ENCODE measurements at regions of chr6 and their contacts with region 1.

Region 1: GRCh38 chr6:36094753-36095496 is 35.4 kb upstream of the MAPK13 start:
- DNase-seq: peak; percentile 55 to 66
- ATAC-seq: peak; percentile 97 to 98
- H3K4me3 ChIP-seq: no peak overlapping the region
- H3K27ac ChIP-seq: peak overlapping the region; percentile 56 to 68; a peak in 5 of 6 replicates
- H3K4me1 ChIP-seq: peaks cover 22% of the 10 kb centered on the region
- CTCF ChIP-seq: peak; percentile 91
- EP300 ChIP-seq: no peak
- POLR2A ChIP-seq: no peak
- RAD21 ChIP-seq: peak; percentile 82 to 84

Region 2: GRCh38 chr6:36027501-36028087 is 67.3 kb before region 1 on chr6 and contains the start of gene MAPK14:
- CTCF ChIA-PET with region 1: interaction called, 84 read pairs
- POLR2A ChIA-PET with region 1: interaction called, 8 read pairs
- DNase-seq: peak; percentile 88 to 99
- ATAC-seq: peak; percentile 88 to 95
- H3K4me3 ChIP-seq: peak within 1 kb of the TSS; percentile 97
- H3K27ac ChIP-seq: peak within 1 kb of the TSS; percentile 88 to 99
- H3K4me1 ChIP-seq: peaks cover 10% of the 10 kb centered on the region; the same call in 2 of the 3 replicates
- CTCF ChIP-seq: peak; percentile 71
- EP300 ChIP-seq: no peak
- POLR2A ChIP-seq: peak; percentile 83
- RAD21 ChIP-seq: peak; percentile 81
- polyA plus RNA-seq, gene MAPK14: 36.7 and 40.2 TPM in 2 replicates

Region 3: GRCh38 chr6:36033935-36034334 is 61.0 kb before region 1 on chr6:
- CTCF ChIA-PET with region 1: interaction called, 84 read pairs
- POLR2A ChIA-PET with region 1: no interaction called
- DNase-seq: peak in 1 of 2 experiments; percentile 3
- ATAC-seq: no peak
- H3K4me3 ChIP-seq: no peak overlapping the region
- H3K27ac ChIP-seq: no peak overlapping the region
- H3K4me1 ChIP-seq: peaks cover 18% of the 10 kb centered on the region; the same call in 2 of the 3 replicates
- CTCF ChIP-seq: no peak
- EP300 ChIP-seq: no peak
- POLR2A ChIP-seq: no peak
- RAD21 ChIP-seq: no peak

Region 4: GRCh38 chr6:36052097-36052496 is 42.8 kb before region 1 on chr6:
- CTCF ChIA-PET with region 1: interaction called, 17 read pairs
- POLR2A ChIA-PET with region 1: no interaction called
- DNase-seq: no peak
- ATAC-seq: no peak
- H3K4me3 ChIP-seq: no peak overlapping the region
- H3K27ac ChIP-seq: no peak overlapping the region
- H3K4me1 ChIP-seq: no peaks in the 10 kb centered on the region
- CTCF ChIP-seq: no peak
- EP300 ChIP-seq: no peak
- POLR2A ChIP-seq: no peak
- RAD21 ChIP-seq: no peak

Region 5: GRCh38 chr6:36073587-36073986 is 21.3 kb before region 1 on chr6:
- CTCF ChIA-PET with region 1: interaction called, 23 read pairs
- POLR2A ChIA-PET with region 1: no interaction called
- DNase-seq: no peak
- ATAC-seq: no peak
- H3K4me3 ChIP-seq: no peak overlapping the region
- H3K27ac ChIP-seq: no peak overlapping the region
- H3K4me1 ChIP-seq: peaks cover under 1% of the 10 kb centered on the region; the same call in 1 of the 3 replicates
- CTCF ChIP-seq: no peak
- EP300 ChIP-seq: no peak
- POLR2A ChIP-seq: no peak
- RAD21 ChIP-seq: no peak

Region 6: DNA sequence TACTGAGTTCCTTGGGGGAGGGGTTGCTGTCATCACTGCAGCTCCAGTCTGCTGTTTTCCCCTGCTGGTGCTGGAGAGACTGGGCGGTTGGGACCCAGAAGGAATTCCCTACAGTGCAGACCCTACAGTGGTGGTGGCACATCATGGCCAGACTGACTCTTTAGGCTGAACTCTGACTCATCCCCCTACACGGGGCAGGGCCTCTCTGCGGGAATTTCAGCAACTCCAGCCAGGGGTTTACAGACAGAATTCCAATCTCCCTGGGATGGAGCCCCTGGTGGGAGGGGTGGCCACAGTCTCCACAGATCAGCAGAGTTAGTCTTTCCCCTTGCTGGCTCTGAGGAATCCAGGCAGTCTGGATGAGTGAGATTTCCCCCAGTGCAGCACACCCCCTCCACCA is 11.5 kb before region 1 on chr6:
- CTCF ChIA-PET with region 1: interaction called, 44 read pairs
- POLR2A ChIA-PET with region 1: no interaction called
- DNase-seq: no peak
- ATAC-seq: no peak
- H3K4me3 ChIP-seq: no peak overlapping the region
- H3K27ac ChIP-seq: no peak overlapping the region
- H3K4me1 ChIP-seq: no peaks in the 10 kb centered on the region
- CTCF ChIP-seq: no peak
- EP300 ChIP-seq: no peak
- POLR2A ChIP-seq: no peak
- RAD21 ChIP-seq: no peak

Region 7: DNA sequence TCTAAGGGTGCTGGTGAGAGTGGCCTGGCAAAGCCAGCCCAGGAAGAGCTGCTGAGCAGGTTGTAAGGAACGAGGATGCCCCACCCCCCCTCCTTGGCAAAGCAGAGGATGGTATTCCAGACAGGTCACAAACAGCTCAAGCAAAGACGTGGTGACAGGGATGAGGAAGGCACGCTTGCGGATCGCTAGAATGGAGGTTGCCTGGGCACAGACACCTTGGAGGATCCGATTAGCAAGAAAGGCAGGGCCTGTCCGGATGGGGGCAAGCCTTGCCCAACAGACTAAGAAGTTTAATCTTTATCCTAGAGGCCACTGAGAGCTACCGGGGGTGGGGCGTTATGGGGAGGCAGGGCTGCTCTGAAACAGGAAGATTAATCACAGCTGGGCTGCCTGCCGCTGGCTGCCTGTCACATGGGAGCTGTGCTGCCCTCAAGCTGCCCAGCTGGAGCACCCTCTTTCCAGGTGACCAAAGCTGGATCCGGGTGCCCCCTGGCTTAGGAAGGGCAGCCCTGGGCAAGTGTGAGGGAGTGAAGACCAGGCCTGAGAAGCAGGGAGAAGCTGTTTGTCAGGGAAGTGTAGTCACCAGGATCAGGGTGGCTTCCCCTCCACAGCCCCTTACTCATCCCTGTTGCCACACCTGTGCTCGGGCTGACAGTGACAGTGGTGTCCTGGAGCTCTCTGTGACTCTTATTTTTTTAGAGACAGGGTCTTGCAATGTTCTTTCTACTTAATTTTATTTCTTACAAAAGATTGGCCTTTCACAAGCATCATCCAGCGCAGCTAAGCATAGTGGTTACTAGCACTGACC is 26.3 kb after region 1 on chr6:
- CTCF ChIA-PET with region 1: interaction called, 16 read pairs
- POLR2A ChIA-PET with region 1: no interaction called
- DNase-seq: peak in 1 of 2 experiments; percentile 11
- ATAC-seq: peak; percentile 16 to 42; a peak in 2 of 6 replicates
- H3K4me3 ChIP-seq: no peak overlapping the region
- H3K27ac ChIP-seq: peak overlapping the region in 1 of 2 experiments; percentile 56; a peak in 3 of 6 replicates
- H3K4me1 ChIP-seq: peaks cover 9% of the 10 kb centered on the region
- CTCF ChIP-seq: no peak
- EP300 ChIP-seq: no peak
- POLR2A ChIP-seq: no peak
- RAD21 ChIP-seq: no peak

Measured in A549 (cell line).